ENCODE measurements at regions of chr1 and their contacts with region 1.

Region 1: GRCh38 chr1:173190101-173190906 is 16.8 kb downstream of the TNFSF4 start:
- H3K4me3 Mint-ChIP-seq: no peak overlapping the region
- H3K27ac Mint-ChIP-seq: peak overlapping the region; percentile 15
- H3K4me1 Mint-ChIP-seq: peaks cover 24% of the 10 kb centered on the region
- H3K27me3 Mint-ChIP-seq: no peaks in the 10 kb centered on the region

Region 2: GRCh38 chr1:172948457-172948856 is 241.8 kb before region 1 on chr1:
- intact Hi-C with region 1: loop called (anchors 10 kb)
- H3K4me3 Mint-ChIP-seq: no peak overlapping the region
- H3K27ac Mint-ChIP-seq: no peak overlapping the region
- H3K4me1 Mint-ChIP-seq: peaks cover 21% of the 10 kb centered on the region
- H3K27me3 Mint-ChIP-seq: peaks cover 17% of the 10 kb centered on the region

Region 3: DNA sequence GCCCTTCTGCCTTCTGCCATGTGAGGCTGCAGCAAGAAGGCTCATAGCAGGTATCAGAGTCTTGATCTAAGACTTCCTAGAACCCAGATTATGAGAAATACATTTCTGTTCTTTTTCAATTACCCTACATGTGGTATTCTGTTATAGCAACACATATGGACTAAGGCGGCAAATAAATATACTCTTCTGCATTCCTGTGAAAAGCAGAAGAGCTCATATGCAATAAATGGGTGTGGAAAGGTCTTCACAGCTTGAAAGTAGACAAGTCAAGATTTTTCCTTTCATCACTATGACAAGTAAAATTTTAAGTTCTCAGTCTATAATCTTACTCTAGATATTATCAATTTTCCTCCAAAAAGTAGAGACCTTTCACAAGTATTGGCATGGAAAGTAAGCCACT is 176.1 kb before region 1 on chr1:
- intact Hi-C with region 1: loop called (anchors 5 kb)
- H3K4me3 Mint-ChIP-seq: no peak overlapping the region
- H3K27ac Mint-ChIP-seq: peak overlapping the region; percentile 69
- H3K4me1 Mint-ChIP-seq: peaks cover 55% of the 10 kb centered on the region
- H3K27me3 Mint-ChIP-seq: peaks cover 3% of the 10 kb centered on the region

Region 4: DNA sequence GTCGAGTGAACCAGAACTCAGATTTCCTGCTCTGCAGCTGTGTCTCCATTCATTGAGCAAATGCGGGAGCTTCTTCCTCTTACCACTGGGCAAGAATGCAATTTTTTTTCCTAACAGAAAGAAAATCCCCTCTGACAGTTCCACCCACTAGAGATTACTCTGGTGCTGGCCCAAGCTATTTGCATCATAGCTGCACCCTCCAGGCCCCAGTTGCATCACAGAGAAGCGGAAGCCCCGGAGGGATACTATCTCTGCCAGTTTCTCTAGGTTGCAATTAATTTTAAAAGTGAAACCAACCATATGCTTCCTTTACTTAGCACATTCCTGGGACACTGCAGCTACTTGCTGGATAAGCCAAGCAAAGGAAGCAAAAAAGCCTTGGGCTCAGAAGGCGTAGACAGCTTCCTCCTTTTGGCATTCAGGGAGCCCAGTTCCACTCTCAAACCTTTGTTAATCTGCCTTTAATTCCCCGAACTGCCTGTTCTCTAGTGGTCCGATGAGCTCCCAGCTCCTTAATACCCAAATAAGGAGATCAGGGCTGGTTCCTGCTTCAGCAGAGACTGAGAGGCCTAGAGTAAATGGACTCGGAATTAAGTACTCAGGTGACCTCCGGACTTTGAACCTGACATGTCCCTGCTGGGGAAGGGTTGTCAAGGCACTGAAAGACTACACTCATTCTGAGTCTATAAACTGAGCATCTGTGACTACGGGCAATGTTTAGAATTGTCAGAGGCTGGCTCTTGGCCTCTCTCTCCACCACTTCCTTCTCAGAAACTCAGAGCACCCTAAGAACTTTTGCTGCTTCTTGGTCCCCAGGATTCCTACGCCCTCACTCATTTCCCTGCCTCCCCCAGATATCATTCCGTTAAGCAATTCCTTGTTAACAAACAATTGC is 67.1 kb before region 1 on chr1:
- intact Hi-C with region 1: loop called (anchors 1 kb)
- H3K4me3 Mint-ChIP-seq: peak overlapping the region; percentile 57
- H3K27ac Mint-ChIP-seq: peak overlapping the region; percentile 94
- H3K4me1 Mint-ChIP-seq: peaks cover 32% of the 10 kb centered on the region
- H3K27me3 Mint-ChIP-seq: no peaks in the 10 kb centered on the region

Region 5: DNA sequence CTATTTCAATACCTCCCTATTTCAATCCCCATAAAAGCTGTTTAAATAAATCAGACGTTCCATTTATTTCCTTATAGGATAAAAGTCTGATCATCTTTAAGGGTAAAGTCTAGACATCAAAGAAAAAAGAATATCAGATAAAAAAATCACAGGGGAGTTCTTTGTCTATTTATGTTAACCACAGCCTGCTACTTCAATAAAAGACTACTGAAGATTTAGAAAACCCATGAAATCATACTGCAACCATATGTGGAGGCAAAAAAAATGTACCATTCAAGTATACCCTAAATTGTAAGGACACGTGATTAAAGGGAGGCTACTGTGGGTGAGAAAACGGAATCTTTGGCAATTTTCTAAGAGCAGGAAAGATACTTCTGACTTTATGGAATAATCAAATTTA is 125.0 kb after region 1 on chr1:
- intact Hi-C with region 1: no loop called
- H3K4me3 Mint-ChIP-seq: no peak overlapping the region
- H3K27ac Mint-ChIP-seq: no peak overlapping the region
- H3K4me1 Mint-ChIP-seq: no peaks in the 10 kb centered on the region
- H3K27me3 Mint-ChIP-seq: no peaks in the 10 kb centered on the region

Measured in dendritic cell treated with granulocyte-macrophage colony-stimulating factor and Interleukin-4, amounts not matched to agents 40 ng/mL and 50 ng/mL, for 4 days (primary cell).